Dorsolateral prefrontal cortex (tissue), 120 donors: ENCODE measurements at regions of chr22 and their contacts with region 1.

Region 1: GRCh38 chr22:44625981-44626687 is 75.9 kb upstream of the PRR5 start:
- DNase-seq: peak in 9 of 10 donors; percentile 43 to 80 (median 67)
- H3K4me3 ChIP-seq: no peak overlapping the region
- H3K27ac ChIP-seq: no peak overlapping the region
- H3K27me3 ChIP-seq: peaks cover 0 to 23% (median under 1%) of the 10 kb centered on the region in 45 donors
- CTCF ChIP-seq: peak; percentile 87 to 99 (median 98)

Region 2: GRCh38 chr22:43273902-43274484 is 1352.1 kb before region 1 on chr22:
- intact Hi-C with region 1: loop called in 1 of 2 experiments (anchors 5 kb)
- DNase-seq: peak in 5 of 10 donors; percentile 10 to 58 (median 26)
- H3K4me3 ChIP-seq: no peak overlapping the region
- H3K27ac ChIP-seq: no peak overlapping the region
- H3K27me3 ChIP-seq: peaks cover 0 to 6% (median 0%) of the 10 kb centered on the region in 45 donors
- CTCF ChIP-seq: peak; percentile 37 to 81 (median 71)

Region 3: DNA sequence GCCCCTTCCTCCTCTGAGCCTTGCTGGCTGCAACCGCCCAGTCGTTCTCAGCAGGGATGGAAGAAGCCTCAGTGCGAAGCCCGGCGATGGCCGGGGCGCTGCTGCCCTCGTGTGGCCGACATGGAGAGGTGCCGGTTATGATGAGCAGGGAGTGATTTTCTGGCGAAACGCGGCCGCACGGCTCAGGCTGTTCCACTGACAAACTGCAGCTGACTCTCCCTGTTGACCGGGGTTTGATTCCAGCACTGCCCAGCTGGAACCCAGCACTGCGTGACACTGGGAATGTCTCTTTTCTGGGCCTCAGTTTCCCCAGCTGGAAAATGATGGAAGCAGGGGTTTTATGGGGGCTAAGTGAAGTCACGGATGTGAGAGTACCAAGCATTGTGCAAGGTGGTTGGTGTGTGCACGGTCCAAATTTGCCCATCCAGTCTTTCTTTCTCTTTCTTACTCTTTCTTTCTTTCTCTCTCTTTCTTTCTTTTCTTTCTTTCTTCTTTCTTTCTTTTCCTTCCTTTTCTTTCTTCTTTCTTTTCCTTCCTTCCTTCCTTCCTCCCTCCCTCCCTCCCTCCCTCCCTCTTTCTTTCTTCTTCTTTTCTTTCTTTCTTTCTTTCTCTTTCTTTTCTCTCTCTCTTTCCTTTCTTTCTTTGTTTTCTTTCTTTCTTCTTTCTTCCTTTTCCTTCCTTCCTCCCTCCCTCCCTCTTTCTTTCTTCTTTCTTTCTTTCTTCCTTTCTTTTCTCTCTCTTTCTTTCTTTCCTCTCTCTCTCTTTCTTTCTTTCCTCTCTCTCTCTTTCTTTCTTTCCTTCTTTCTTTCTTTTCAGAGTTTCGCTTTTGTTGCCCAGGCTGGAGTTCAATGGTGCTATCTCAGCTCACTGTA is 1240.1 kb before region 1 on chr22:
- intact Hi-C with region 1: loop called in 1 of 2 experiments (anchors 5 kb)
- DNase-seq: peak; percentile 60 to 89 (median 78)
- H3K4me3 ChIP-seq: peak overlapping the region in 40 of 59 donors; percentile 1 to 54 (median 26)
- H3K27ac ChIP-seq: peak overlapping the region in 1 of 59 donors; percentile 44
- H3K27me3 ChIP-seq: peaks cover 0 to 21% (median 0%) of the 10 kb centered on the region in 45 donors
- CTCF ChIP-seq: peak; percentile 76 to 98 (median 92)

Region 4: DNA sequence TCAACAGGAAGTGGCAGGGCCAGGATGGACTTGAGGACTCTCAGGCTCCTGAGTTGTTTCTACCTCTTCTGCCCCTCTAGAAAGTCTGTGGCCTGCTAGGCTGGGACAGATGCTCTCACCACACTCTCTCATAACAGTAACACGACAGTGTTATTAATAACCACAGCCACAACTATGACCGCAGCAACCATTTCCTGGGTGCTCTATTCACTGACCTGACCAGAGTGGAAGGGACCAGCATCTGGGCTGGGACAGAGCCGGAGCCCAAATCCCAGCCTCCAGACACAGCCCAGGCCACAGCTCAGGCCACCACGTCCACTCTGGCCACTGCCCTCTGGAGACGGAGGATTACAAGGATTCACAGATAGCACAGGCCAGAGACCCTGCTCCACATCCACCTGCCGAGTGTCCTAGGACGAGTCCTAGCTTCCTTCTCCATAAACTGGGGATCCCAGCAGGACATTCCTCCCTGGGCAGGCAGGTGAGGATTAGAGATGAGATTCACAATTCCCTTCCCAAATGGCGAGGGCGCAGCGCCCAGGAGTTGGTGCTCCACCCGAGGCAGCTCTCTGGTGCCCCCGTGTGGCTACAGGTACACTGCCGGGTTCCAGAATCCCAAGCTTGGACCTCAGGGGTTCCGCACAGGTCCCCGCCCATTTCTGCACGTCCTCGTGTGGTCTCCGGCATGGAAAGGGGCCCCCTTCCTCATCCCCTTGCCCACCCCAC is 741.4 kb before region 1 on chr22:
- intact Hi-C with region 1: loop called in 1 of 2 experiments (anchors 10 kb)
- DNase-seq: peak; percentile 46 to 69 (median 59)
- H3K4me3 ChIP-seq: no peak overlapping the region
- H3K27ac ChIP-seq: no peak overlapping the region
- H3K27me3 ChIP-seq: peaks cover 0 to 21% (median 8%) of the 10 kb centered on the region in 45 donors
- CTCF ChIP-seq: peak; percentile 34 to 78 (median 66)

Region 5: DNA sequence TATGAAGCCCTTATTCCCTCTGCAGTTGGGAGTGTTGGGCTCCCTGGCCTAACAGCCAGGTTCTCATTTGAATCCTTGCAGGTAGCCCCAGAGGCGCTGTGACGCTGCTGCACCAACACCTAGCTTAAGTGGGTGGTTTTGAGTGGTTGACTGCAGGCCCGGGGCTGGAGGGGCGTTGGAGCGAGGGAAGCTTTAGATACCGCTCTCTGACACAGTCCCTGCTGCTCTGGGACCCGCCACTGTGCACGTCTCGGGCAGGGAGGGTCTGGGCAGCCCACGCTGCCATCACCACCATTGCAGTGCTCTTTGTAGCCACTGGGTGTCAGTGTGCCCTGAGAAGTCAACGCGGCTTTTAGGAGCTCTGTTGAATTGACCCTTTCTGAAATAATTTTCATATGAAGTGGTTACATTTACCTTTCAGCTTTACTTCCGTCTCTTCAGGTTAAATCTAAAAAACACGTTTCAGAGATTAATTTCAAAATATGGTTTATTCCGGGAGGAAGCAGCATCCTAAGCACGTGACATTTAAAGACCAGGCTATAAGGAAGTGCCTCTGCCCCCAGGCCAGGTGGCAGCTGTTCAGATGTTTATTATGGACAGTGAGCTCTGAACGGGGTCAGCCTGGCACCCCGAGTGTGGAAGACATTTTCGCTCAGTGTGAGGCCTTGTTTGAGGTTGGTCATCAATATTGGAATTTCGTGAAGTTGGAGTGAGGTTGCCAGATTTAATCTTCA is 632.9 kb before region 1 on chr22:
- intact Hi-C with region 1: loop called (anchors 1 to 2 kb)
- DNase-seq: peak in 8 of 10 donors; percentile 24 to 69 (median 55)
- H3K4me3 ChIP-seq: no peak overlapping the region
- H3K27ac ChIP-seq: peak overlapping the region in 42 of 59 donors; percentile 1 to 82 (median 61)
- H3K27me3 ChIP-seq: no peaks in the 10 kb centered on the region
- CTCF ChIP-seq: peak; percentile 79 to 99 (median 95)

Region 6: GRCh38 chr22:44080936-44081861 is 544.9 kb before region 1 on chr22:
- intact Hi-C with region 1: loop called (anchors 2 to 5 kb)
- DNase-seq: peak; percentile 72 to 91 (median 82)
- H3K4me3 ChIP-seq: peak overlapping the region in 56 of 59 donors; percentile 4 to 63 (median 42)
- H3K27ac ChIP-seq: peak overlapping the region in 8 of 59 donors; percentile 11 to 46 (median 28)
- H3K27me3 ChIP-seq: no peaks in the 10 kb centered on the region
- CTCF ChIP-seq: peak; percentile 57 to 96 (median 89)

Region 7: GRCh38 chr22:44129619-44129976 is 496.5 kb before region 1 on chr22:
- intact Hi-C with region 1: no loop called
- DNase-seq: peak in 4 of 10 donors; percentile 37 to 71 (median 54)
- H3K4me3 ChIP-seq: peak overlapping the region in 15 of 59 donors; percentile 1 to 40 (median 16)
- H3K27ac ChIP-seq: peak overlapping the region in 38 of 59 donors; percentile 1 to 83 (median 46)
- H3K27me3 ChIP-seq: no peaks in the 10 kb centered on the region
- CTCF ChIP-seq: no peak

Region 8: GRCh38 chr22:44337678-44338004 is 288.5 kb before region 1 on chr22:
- intact Hi-C with region 1: loop called in 1 of 2 experiments (anchors 10 kb)
- DNase-seq: peak in 9 of 10 donors; percentile 36 to 90 (median 74)
- H3K4me3 ChIP-seq: peak overlapping the region in 6 of 59 donors; percentile 5 to 16 (median 10)
- H3K27ac ChIP-seq: peak overlapping the region in 27 of 59 donors; percentile 4 to 67 (median 44)
- H3K27me3 ChIP-seq: peaks cover 0 to 16% (median 3%) of the 10 kb centered on the region in 45 donors
- CTCF ChIP-seq: no peak